ENCODE measurements at regions of chr4 and their contacts with region 1.

Region 1: GRCh38 chr4:83516042-83516772 is 19.7 kb upstream of the GPAT3 start:
- DNase-seq: no peak
- H3K4me3 ChIP-seq: no peak overlapping the region
- H3K27ac ChIP-seq: no peak overlapping the region
- H3K4me1 ChIP-seq: no peaks in the 10 kb centered on the region
- H3K27me3 ChIP-seq: no peaks in the 10 kb centered on the region
- CTCF ChIP-seq: no peak
- EP300 ChIP-seq: no peak
- POLR2A ChIP-seq: no peak

Region 2: DNA sequence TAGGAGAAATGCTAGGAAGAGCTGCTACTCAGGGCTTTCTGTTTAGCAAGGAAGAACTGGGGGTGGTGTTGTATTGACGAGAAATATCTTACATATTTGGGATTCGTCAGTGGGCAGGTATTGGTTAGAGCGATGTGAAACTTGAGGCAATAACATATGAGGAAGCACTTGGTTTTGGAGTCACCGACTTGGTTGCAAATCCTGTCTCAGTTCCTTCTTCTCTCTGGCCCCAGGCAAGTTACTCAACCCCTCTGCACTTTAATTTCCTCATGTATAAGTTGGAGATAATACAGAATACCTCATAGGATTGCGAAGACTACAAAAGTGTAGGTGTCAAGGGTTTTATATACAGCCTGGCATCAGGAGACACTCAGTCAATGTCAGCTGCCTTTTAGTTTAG is 53.8 kb after region 1 on chr4:
- intact Hi-C with region 1: loop called (anchors 10 kb)
- DNase-seq: peak in 1 of 2 donors; percentile 13
- H3K4me3 ChIP-seq: no peak overlapping the region
- H3K27ac ChIP-seq: no peak overlapping the region
- H3K4me1 ChIP-seq: peaks cover 0 to 3% (median 0%) of the 10 kb centered on the region in 4 donors
- H3K27me3 ChIP-seq: no peaks in the 10 kb centered on the region
- CTCF ChIP-seq: no peak
- EP300 ChIP-seq: no peak
- POLR2A ChIP-seq: no peak

Region 3: DNA sequence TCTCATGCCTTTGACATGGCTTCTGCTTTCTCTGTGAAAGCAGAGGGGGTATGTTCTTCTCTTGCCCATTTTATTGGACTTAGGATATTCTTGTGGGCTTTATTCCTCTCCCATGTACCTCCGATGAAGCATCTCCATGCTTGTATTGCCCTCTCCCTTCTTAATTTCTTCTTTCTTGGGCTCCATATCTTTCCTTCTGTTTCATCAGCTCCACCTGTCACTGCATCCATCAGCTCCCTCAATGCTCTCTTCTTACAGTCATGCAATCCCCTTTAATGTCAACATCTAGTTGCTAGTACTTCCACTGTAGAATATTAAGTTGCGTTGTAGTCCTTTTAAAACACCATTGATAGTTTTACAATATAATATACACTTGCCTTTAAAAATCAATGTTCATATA is 277.3 kb after region 1 on chr4:
- intact Hi-C with region 1: no loop called
- DNase-seq: no peak
- H3K4me3 ChIP-seq: no peak overlapping the region
- H3K27ac ChIP-seq: no peak overlapping the region
- H3K4me1 ChIP-seq: no peaks in the 10 kb centered on the region
- H3K27me3 ChIP-seq: no peaks in the 10 kb centered on the region
- CTCF ChIP-seq: no peak
- EP300 ChIP-seq: no peak
- POLR2A ChIP-seq: no peak